Sigmoid colon (tissue), 7 donors: ENCODE measurements at regions of chr15 and their contacts with region 1.

Region 1: GRCh38 chr15:88546248-88547129 is at the start of gene DET1:
- DNase-seq: peak; percentile 96
- H3K4me3 ChIP-seq: peak within 1 kb of the TSS; percentile 59 to 83 (median 70)
- H3K27ac ChIP-seq: peak within 1 kb of the TSS; percentile 80 to 91 (median 86)
- H3K4me1 ChIP-seq: peaks cover 0 to 38% (median 27%) of the 10 kb centered on the region in 4 donors
- H3K27me3 ChIP-seq: no peaks in the 10 kb centered on the region
- CTCF ChIP-seq: peak; percentile 48 to 71 (median 59)
- EP300 ChIP-seq: no peak
- POLR2A ChIP-seq: no peak
- total RNA-seq, gene DET1: 7.4 to 13.0 (median 8.8) TPM

Region 2: DNA sequence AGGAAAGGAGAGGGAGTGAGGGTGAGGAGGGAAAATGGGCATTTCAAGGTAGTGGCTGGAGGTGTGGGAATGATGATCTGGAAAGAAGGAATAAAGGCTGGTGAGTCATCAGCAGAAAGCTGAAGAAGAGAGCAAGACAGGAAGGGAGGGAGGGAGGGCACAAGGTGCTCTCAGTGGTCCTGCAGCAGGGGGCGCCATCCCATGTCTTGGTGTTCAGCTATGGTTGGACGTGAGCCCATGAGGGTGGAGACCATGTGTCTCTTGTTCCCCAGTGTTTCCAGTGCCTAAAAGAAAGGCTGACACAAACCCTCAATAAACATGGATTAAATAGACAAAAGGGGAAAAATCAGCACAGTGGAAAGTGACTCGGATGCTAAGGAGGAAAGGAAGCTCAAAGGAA is 518.5 kb before region 1 on chr15:
- intact Hi-C with region 1: no loop called
- DNase-seq: no peak
- H3K4me3 ChIP-seq: no peak overlapping the region
- H3K27ac ChIP-seq: no peak overlapping the region
- H3K4me1 ChIP-seq: no peaks in the 10 kb centered on the region
- H3K27me3 ChIP-seq: no peaks in the 10 kb centered on the region
- CTCF ChIP-seq: no peak
- EP300 ChIP-seq: no peak
- POLR2A ChIP-seq: no peak

Region 3: DNA sequence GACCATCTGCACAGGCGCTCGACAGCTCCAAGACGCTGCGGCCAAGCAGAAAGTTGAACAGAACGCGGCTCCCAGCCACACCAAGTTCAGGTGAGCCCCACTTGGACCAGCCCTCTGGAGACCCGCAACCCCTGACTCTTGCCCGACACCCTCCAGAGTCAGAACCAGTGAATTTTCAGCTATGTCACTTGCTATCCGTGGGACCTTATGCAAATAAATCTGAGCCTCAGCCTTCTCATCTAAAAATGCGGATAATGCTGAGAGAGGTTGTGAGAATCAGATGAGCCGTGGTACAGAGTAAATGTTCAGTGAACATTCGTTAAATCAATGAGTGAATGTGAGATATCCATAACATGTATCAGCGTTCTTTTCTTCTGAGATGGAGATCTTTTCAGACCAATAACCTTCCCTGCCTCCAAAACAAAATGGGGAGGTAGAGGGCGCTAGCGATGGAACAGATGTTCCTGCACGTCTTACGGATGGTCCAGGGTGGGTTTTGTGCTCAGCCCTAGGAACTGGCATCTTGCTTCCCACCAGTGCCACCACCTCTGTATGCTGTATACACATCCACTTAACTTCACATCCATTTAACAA is 78.5 kb before region 1 on chr15:
- intact Hi-C with region 1: loop called (anchors 2 kb)
- DNase-seq: no peak
- H3K4me3 ChIP-seq: peak overlapping the region; percentile 62 to 86 (median 78)
- H3K27ac ChIP-seq: peak overlapping the region; percentile 83 to 89 (median 88)
- H3K4me1 ChIP-seq: peaks cover 0 to 32% (median 28%) of the 10 kb centered on the region in 4 donors
- H3K27me3 ChIP-seq: no peaks in the 10 kb centered on the region
- CTCF ChIP-seq: no peak
- EP300 ChIP-seq: no peak
- POLR2A ChIP-seq: no peak

Region 4: GRCh38 chr15:88476635-88477060 is 69.8 kb before region 1 on chr15:
- intact Hi-C with region 1: loop called (anchors 2 kb)
- DNase-seq: no peak
- H3K4me3 ChIP-seq: no peak overlapping the region
- H3K27ac ChIP-seq: peak overlapping the region in 3 of 4 donors; percentile 5 to 67 (median 53)
- H3K4me1 ChIP-seq: peaks cover 0 to 9% (median 6%) of the 10 kb centered on the region in 4 donors
- H3K27me3 ChIP-seq: no peaks in the 10 kb centered on the region
- CTCF ChIP-seq: peak; percentile 30 to 64 (median 50)
- EP300 ChIP-seq: no peak
- POLR2A ChIP-seq: no peak

Region 5: DNA sequence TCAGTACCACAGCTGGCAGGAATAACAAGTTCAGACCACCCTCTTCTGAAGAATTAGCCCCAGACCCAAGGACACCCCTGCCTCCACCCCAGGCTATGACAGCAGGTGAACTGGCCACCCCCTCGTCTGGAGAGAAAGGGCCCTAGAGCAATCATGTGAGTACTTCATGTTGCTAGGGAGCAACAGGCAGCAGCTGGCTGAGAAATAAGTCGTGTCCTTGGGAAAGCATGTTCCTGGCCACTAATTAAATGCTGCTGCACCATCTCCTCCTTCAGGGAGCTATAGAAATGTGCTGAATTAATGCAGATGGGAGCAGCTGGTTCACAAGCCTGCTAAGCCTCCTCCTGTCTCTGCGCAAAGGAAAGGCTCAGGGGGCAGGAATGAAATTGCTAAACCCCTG is 47.5 kb before region 1 on chr15:
- intact Hi-C with region 1: no loop called
- DNase-seq: no peak
- H3K4me3 ChIP-seq: no peak overlapping the region
- H3K27ac ChIP-seq: no peak overlapping the region
- H3K4me1 ChIP-seq: no peaks in the 10 kb centered on the region
- H3K27me3 ChIP-seq: no peaks in the 10 kb centered on the region
- CTCF ChIP-seq: no peak
- EP300 ChIP-seq: no peak
- POLR2A ChIP-seq: no peak

Region 6: GRCh38 chr15:88563638-88564037 is 17.1 kb after region 1 on chr15:
- intact Hi-C with region 1: no loop called
- DNase-seq: no peak
- H3K4me3 ChIP-seq: no peak overlapping the region
- H3K27ac ChIP-seq: no peak overlapping the region
- H3K4me1 ChIP-seq: no peaks in the 10 kb centered on the region
- H3K27me3 ChIP-seq: no peaks in the 10 kb centered on the region
- CTCF ChIP-seq: no peak
- EP300 ChIP-seq: no peak
- POLR2A ChIP-seq: no peak

Region 7: DNA sequence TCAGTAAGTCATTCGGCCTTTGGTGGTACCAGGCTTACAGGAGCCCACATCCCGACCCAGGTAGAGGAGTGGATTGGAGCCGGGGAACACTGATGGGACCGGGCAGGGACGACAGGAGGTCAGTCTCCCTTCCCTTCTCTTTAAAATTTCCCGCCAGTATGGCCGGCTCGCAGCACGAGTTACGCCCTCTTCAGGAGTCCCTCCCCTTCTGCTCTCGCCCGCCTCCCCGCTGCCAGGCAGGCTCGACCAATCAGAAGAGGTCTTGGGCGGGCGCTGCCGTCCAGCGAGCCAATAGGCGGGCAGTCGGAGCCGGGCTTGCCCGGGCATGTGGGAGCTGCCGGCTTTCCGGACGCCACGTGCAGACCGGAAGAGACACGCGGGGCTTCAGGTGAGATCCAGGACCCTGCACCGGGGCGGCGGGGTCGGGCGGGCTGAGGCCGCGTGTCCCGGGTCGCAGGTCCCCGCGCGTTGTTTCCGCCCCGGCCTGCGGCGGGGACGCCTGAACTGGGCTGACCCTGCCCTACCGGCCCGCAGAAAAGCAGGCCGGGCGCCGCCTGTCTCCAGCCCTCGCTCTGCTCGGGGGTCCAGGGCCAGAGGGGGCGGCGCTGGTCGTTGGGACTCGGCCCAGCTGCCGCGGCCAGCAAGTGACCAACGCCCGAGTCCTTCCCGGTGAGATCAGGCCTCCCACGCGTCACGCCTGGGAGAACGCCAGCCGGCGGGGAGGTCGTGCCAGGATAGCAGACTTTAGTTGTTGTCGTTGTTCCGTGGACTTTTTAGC is 74.7 kb after region 1 on chr15 and contains the start of gene AEN:
- intact Hi-C with region 1: loop called (anchors 5 kb)
- DNase-seq: peak; percentile 98
- H3K4me3 ChIP-seq: peak within 1 kb of the TSS; percentile 67 to 96 (median 94)
- H3K27ac ChIP-seq: peak within 1 kb of the TSS; percentile 82 to 93 (median 86)
- H3K4me1 ChIP-seq: peaks cover 0 to 44% (median 41%) of the 10 kb centered on the region in 4 donors
- H3K27me3 ChIP-seq: no peaks in the 10 kb centered on the region
- CTCF ChIP-seq: no peak
- EP300 ChIP-seq: no peak
- POLR2A ChIP-seq: no peak
- total RNA-seq, gene AEN: 5.8 to 18.3 (median 9.4) TPM

Region 8: DNA sequence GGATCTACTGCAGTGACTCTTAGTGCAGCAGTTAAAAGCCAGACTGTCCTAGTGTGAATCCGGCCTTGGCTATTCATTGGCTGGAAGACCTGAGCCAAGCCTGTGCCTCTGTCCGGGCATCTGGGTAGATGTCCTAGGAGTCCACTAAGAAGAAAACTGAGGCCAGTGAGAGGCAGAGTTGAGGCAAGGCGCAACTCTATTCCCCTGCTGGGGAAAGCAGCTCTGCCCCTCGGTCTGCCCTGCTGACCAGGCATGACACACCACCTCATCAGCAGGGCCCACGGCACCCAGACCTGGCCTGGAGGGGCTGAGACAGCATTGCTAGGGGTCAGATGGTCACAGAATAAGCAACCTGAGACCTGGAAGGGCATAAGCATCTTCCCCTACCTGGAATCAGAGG is 495.0 kb after region 1 on chr15:
- intact Hi-C with region 1: no loop called
- DNase-seq: no peak
- H3K4me3 ChIP-seq: no peak overlapping the region
- H3K27ac ChIP-seq: peak overlapping the region in 3 of 4 donors; percentile 12 to 67 (median 22)
- H3K4me1 ChIP-seq: peaks cover 0 to 18% (median 9%) of the 10 kb centered on the region in 4 donors
- H3K27me3 ChIP-seq: no peaks in the 10 kb centered on the region
- CTCF ChIP-seq: no peak
- EP300 ChIP-seq: no peak
- POLR2A ChIP-seq: no peak

Region 9: GRCh38 chr15:89101302-89102191 is 555.1 kb after region 1 on chr15:
- intact Hi-C with region 1: loop called (anchors 10 kb)
- DNase-seq: peak; percentile 93
- H3K4me3 ChIP-seq: no peak overlapping the region
- H3K27ac ChIP-seq: peak overlapping the region; percentile 77 to 97 (median 89)
- H3K4me1 ChIP-seq: peaks cover 0 to 100% (median 96%) of the 10 kb centered on the region in 4 donors
- H3K27me3 ChIP-seq: no peaks in the 10 kb centered on the region
- CTCF ChIP-seq: no peak
- EP300 ChIP-seq: peak in 2 of 4 donors; percentile 82 to 96
- POLR2A ChIP-seq: no peak